Activated CD4-positive, alpha-beta T cell treated with anti-CD3 and anti-CD28 coated beads, Interleukin-2, amount 10 ng/mL, durations not matched to agents 24 days and 14 days (primary cell): ENCODE measurements at regions of chr1 and their contacts with region 1.

Region 1: GRCh38 chr1:185420588-185421081 is 103.6 kb upstream of the IVNS1ABP start:
- DNase-seq: peak; percentile 86
- H3K4me3 Mint-ChIP-seq: peak overlapping the region; percentile 74
- H3K27ac Mint-ChIP-seq: peak overlapping the region; percentile 92
- H3K4me1 Mint-ChIP-seq: peaks cover 62% of the 10 kb centered on the region
- H3K27me3 Mint-ChIP-seq: no peaks in the 10 kb centered on the region

Region 2: DNA sequence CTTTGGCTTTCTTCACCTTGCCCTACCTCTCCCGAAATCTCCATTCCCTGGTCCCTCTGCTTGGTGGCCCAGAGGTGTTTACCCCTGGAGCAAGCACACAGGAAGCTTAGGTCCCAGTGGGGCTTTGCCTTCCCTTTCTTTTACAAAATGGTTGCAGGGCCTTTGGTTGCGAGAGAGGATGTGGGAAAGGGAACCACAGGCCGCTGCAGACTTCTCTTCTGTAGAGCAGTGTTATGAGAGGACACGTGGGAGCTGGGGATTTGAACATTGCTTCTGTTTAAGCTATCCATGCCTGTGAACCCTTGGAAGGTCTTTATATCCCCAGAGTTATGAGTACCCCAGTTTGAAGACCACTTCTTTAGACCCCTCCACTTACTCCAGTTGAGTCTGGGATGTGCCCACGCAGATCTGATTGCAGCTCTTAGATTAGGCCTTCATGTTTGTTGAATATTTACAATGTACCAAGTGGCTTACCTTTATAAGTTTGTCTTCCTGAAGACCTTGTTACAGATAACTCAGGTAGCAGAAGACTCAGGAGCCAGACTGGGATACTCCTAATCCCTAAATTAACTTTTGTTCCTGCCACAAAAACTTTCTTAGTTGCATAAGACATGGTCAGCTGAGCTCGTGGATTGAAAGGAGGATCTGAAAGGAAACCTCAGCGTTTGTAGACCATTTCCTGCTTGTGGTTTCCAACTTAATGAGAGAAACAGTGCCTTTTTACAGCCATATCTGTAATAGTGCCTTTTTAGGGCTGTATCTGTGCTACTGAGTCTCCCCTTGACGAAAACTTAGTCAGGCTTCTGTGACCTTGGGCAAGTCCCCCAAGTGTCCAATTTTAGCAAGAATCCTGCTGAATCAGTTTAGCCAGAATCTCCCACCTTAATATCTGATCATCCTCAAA is 81.7 kb before region 1 on chr1:
- intact Hi-C with region 1: loop called (anchors 5 kb)
- DNase-seq: peak; percentile 90
- H3K4me3 Mint-ChIP-seq: peak overlapping the region; percentile 57
- H3K27ac Mint-ChIP-seq: peak overlapping the region; percentile 70
- H3K4me1 Mint-ChIP-seq: peaks cover 40% of the 10 kb centered on the region
- H3K27me3 Mint-ChIP-seq: peaks cover 2% of the 10 kb centered on the region

Region 3: DNA sequence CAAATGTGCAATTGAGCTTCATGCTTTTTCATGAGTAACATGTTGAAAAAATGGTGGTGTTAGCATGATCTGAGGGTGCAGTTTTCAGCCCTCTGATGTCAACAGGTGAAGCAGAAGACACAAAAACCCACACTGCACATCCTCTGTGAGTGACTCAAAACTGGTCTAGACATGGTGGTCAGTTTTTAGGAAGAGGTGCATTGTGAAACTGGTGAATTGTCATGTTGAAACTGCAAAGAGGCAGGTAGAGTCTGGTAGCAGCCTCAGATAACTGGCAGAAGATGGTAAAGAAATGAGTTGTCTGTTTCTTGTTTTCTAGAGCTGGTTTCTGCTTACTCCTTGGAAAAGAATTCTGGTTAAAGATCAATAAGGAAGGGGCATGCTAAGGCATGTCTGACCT is 216.2 kb after region 1 on chr1:
- intact Hi-C with region 1: loop called (anchors 1 kb)
- DNase-seq: peak; percentile 84
- H3K4me3 Mint-ChIP-seq: peak overlapping the region; percentile 18
- H3K27ac Mint-ChIP-seq: peak overlapping the region; percentile 92
- H3K4me1 Mint-ChIP-seq: peaks cover 20% of the 10 kb centered on the region
- H3K27me3 Mint-ChIP-seq: no peaks in the 10 kb centered on the region

Region 4: DNA sequence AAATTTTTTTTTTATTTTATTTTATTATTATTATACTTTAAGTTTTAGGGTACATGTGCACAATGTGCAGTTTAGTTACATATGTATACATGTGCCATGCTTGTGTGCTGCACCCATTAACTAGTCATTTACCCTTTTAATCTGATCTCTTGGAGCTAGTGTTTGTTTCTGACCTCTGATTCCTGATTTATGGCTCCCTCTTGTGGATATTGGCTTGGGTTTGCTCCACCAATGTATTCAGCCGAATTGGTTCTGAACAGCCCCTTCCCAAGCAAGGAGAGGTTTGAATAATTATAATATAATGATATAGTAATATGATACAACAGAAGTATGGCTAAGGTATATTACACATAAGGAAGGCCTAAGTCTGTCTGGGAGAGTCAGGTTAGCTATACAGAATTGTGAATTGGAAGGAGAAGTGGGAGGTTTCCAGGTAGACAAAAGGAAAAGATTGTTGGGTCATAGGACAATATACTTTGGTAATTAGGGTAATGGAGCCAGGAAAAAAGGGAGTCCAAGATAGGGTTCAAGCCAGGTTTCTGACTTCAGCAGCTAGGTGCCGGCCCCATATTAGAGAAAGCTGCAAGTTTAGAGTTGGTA is 260.5 kb after region 1 on chr1:
- intact Hi-C with region 1: loop called (anchors 5 kb)
- DNase-seq: peak; percentile 80
- H3K4me3 Mint-ChIP-seq: no peak overlapping the region
- H3K27ac Mint-ChIP-seq: no peak overlapping the region
- H3K4me1 Mint-ChIP-seq: peaks cover 18% of the 10 kb centered on the region
- H3K27me3 Mint-ChIP-seq: peaks cover 3% of the 10 kb centered on the region